Activated CD4-positive, alpha-beta T cell treated with anti-CD3 and anti-CD28 coated beads for 36 hours (primary cell): ENCODE measurements at regions of chr1 and their contacts with region 1.

Region 1: DNA sequence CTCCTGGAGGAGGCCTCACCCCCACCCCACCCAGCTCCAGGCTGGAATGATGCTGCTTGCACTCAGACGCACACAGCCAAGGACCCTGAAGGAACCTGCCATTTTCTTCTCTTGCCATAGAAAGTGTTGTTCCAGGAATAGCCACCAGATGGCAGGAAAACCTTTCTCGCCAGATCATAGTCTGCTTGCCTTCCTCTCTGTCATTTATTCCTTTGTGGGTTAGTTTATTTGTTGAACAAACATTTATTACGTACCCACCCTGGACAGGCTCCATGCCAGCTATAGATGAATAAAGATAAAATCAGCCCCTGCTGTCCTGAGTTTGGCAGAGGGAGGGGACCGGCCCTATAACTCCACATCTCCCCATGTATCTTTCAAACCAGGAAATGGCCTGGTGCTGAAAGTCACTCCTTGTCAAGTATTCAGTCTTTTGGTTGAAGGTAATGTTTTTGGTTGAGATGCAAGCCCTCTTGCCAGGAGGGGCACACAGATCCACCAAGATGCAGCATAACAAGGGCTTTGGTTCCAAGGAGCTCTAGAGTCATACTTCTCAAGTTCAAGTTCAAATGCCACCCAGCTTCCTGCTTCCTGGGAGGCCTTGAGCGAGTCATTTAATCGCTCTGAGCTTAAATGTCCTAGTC is 7.0 kb upstream of the KCNC4 start:
- DNase-seq: peak; percentile 82
- ATAC-seq: peak; percentile 63
- H3K4me3 Mint-ChIP-seq: no peak overlapping the region
- H3K27ac Mint-ChIP-seq: peak overlapping the region; percentile 79
- H3K4me1 Mint-ChIP-seq: peaks cover 15% of the 10 kb centered on the region
- H3K27me3 Mint-ChIP-seq: no peaks in the 10 kb centered on the region

Region 2: GRCh38 chr1:109598655-109599054 is 604.5 kb before region 1 on chr1:
- CTCF ChIA-PET with region 1: no interaction called
- POLR2A ChIA-PET with region 1: no interaction called
- intact Hi-C with region 1: no loop called
- DNase-seq: no peak
- ATAC-seq: no peak
- H3K4me3 Mint-ChIP-seq: no peak overlapping the region
- H3K27ac Mint-ChIP-seq: no peak overlapping the region
- H3K4me1 Mint-ChIP-seq: peaks cover 21% of the 10 kb centered on the region
- H3K27me3 Mint-ChIP-seq: no peaks in the 10 kb centered on the region

Region 3: GRCh38 chr1:110188035-110188618 is 15.0 kb before region 1 on chr1:
- CTCF ChIA-PET with region 1: interaction called, 31 read pairs
- POLR2A ChIA-PET with region 1: no interaction called
- intact Hi-C with region 1: no loop called
- DNase-seq: no peak
- ATAC-seq: no peak
- H3K4me3 Mint-ChIP-seq: no peak overlapping the region
- H3K27ac Mint-ChIP-seq: no peak overlapping the region
- H3K4me1 Mint-ChIP-seq: peaks cover 8% of the 10 kb centered on the region
- H3K27me3 Mint-ChIP-seq: peaks cover 10% of the 10 kb centered on the region

Region 4: DNA sequence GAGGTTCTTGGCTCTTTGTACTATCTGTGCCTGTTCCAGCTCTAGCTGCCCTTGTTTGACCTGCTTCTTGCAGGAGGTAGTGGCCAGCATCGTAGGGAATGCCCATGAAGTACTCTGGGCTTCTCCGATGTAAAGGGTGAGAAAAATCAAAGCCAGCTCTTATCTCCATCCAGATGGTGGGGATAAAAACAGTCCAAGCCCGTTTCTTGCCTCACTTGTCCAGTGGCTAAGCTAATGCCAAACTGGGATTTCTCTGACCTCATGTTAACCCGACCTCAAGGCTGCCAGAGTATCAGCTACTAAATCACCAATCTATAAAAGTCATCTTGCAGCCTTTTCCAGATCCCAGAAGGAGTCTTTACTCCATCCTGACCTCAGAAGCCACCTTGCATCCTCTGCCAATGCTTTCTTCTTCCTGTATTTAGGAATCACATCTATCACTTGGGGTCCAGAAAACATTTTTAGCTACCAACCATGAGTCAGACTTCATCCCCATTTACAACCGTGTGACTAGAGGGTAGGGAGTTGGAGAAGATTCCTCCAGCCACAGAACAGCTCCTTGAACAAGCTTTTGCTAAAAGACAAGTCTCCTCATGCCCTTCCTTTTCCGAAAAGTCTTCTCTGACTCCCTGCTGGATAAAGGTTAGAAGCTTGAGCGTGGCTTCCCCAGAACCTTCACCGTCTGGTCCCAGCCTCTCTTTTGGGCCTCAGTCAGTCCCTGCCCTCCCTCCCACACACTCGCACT is 42.9 kb after region 1 on chr1:
- CTCF ChIA-PET with region 1: interaction called, 19 read pairs
- POLR2A ChIA-PET with region 1: no interaction called
- intact Hi-C with region 1: no loop called
- DNase-seq: no peak
- ATAC-seq: no peak
- H3K4me3 Mint-ChIP-seq: no peak overlapping the region
- H3K27ac Mint-ChIP-seq: no peak overlapping the region
- H3K4me1 Mint-ChIP-seq: peaks cover 10% of the 10 kb centered on the region
- H3K27me3 Mint-ChIP-seq: no peaks in the 10 kb centered on the region

Region 5: DNA sequence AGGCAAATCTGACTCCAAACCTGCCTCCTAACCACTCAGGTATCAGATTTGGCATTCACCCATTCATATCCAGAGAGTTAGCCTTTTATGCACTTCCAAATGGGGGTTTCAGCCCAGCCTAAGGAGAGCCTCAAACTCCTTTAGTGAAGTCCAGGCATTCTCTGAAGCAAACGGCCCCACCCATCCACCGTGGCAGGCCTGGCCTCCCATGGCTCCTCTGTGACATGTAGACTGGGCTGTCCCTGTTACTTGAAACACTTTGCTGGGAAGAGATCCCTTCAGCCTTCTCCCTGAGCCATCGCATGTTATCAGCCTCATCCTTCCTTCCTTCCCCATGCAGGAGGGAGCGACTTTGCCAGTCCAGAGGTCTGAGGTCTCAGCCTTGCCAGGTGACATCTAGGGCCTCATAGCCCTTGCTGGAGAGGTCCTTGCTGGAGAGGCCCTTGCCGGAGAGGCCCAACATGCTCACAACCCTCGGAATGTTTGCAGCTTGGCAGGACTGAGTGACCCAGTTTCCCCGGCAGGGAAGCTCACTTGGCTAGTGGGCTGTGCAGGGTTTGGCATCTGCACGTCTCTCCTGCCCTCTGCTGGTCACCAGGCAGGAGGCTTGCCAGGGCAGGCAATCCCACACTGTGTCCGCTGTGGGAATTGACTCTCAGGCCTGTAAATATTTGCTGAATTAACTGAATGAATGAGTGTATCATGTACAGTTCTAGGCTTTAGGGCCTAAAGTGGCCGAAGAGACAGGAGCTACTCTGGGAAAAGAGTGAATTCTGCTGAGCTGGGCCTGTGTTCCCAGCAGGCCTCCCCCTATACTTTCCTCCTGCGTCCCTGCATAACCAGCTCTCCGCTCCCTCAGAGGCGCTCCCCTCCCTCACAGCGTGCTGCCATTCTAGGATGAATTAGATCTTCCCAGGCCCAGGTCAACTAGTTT is 109.3 kb after region 1 on chr1:
- CTCF ChIA-PET with region 1: interaction called, 547 read pairs
- POLR2A ChIA-PET with region 1: interaction called, 10 read pairs
- intact Hi-C with region 1: loop called (anchors 1 kb)
- DNase-seq: peak; percentile 86
- ATAC-seq: peak; percentile 98
- H3K4me3 Mint-ChIP-seq: no peak overlapping the region
- H3K27ac Mint-ChIP-seq: no peak overlapping the region
- H3K4me1 Mint-ChIP-seq: no peaks in the 10 kb centered on the region
- H3K27me3 Mint-ChIP-seq: no peaks in the 10 kb centered on the region

Region 6: DNA sequence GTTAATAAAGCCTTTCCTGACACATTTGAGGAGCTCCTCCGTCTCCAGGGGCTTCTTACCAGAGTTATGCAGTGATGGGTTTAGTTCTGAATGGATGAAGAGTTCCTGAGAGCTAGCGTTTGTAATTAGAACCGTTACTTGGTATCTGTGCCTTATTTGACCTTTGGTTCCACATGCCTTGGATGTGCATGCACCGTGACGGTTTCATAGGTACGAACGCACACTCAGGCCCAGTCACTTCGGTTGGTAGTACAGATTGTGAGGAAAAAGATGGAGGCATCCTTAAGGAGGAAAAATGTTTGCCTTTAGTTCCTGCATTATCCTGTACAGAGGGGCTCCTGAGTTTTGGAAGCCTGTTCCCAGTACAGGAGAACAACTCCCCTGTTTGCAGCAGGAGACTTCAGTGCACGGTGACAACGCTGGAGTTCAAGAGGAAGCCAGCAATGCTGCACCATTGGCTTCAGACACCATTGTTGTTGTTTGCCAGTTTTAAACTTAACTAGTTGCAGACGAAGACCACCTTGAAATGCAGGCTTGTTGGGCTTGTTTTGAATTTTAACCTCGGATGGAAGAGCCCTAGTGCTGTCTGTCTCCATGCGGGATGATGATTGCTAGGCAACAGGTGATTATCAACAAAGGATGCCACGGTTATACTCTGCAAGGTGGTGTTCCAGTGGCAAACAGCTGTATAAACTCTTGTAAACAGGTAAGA is 144.2 kb after region 1 on chr1:
- CTCF ChIA-PET with region 1: interaction called, 137 read pairs
- POLR2A ChIA-PET with region 1: interaction called, 3 read pairs
- intact Hi-C with region 1: no loop called
- DNase-seq: no peak
- ATAC-seq: no peak
- H3K4me3 Mint-ChIP-seq: peak overlapping the region; percentile 23
- H3K27ac Mint-ChIP-seq: no peak overlapping the region
- H3K4me1 Mint-ChIP-seq: peaks cover 84% of the 10 kb centered on the region
- H3K27me3 Mint-ChIP-seq: no peaks in the 10 kb centered on the region

Region 7: DNA sequence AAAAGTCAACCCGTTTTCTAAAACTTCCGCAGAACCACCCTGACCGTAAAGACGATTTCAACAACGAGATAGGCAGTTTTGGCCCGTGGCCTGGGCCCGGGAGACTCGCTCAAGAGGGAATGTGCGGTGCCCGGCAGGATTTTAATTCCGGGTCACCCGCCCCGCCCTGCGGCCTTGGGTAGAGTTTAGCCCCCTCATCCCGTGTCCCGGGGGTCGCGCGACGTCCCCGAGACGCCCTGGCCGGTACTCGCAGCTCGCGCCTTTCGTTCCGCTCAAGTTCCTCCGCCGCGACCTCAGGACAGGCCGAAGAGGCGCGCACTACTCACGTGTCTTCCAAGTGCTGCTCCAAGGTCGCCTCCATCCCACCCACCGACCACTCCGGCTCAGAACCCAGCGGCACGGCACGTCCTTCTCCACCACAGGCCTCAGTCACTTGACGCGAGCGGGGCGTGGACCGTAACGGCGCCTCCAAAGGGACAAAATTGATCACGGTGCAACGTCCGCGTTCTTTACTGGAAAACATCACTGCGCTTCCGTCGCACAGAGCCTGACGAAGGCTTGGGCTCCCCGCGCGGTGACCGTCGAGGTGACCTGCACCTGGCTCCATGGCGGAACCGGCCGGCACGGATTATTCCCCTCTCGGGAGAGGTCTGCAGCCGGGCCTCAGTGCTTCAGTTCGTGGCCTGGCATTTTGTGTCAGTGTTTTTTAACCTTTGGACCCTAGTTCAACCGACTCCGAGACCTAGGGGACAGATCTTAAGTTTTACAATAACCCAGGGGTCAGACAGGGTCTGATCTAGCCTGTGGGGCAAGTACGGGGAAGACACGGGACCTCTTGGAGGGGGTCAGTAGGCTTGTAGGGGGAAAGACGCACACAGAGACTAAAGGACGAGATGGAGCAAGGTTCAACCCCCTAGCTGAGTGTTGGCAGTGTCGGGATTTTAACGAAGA is 204.4 kb after region 1 on chr1 and contains the start of gene LAMTOR5:
- CTCF ChIA-PET with region 1: interaction called, 18 read pairs
- POLR2A ChIA-PET with region 1: no interaction called
- intact Hi-C with region 1: loop called (anchors 1 to 2 kb)
- DNase-seq: peak; percentile 95
- ATAC-seq: peak; percentile 93
- H3K4me3 Mint-ChIP-seq: peak within 1 kb of the TSS; percentile 98
- H3K27ac Mint-ChIP-seq: peak within 1 kb of the TSS; percentile 100
- H3K4me1 Mint-ChIP-seq: peaks cover 17% of the 10 kb centered on the region
- H3K27me3 Mint-ChIP-seq: no peaks in the 10 kb centered on the region
- total RNA-seq, gene LAMTOR5: 141 to 155 TPM

Region 8: GRCh38 chr1:110440877-110441276 is 237.7 kb after region 1 on chr1:
- CTCF ChIA-PET with region 1: no interaction called
- POLR2A ChIA-PET with region 1: no interaction called
- intact Hi-C with region 1: no loop called
- DNase-seq: no peak
- ATAC-seq: no peak
- H3K4me3 Mint-ChIP-seq: no peak overlapping the region
- H3K27ac Mint-ChIP-seq: no peak overlapping the region
- H3K4me1 Mint-ChIP-seq: no peaks in the 10 kb centered on the region
- H3K27me3 Mint-ChIP-seq: no peaks in the 10 kb centered on the region